CD8-positive, alpha-beta T cell (primary cell): ENCODE measurements at regions of chr12 and their contacts with region 1.

Region 1: DNA sequence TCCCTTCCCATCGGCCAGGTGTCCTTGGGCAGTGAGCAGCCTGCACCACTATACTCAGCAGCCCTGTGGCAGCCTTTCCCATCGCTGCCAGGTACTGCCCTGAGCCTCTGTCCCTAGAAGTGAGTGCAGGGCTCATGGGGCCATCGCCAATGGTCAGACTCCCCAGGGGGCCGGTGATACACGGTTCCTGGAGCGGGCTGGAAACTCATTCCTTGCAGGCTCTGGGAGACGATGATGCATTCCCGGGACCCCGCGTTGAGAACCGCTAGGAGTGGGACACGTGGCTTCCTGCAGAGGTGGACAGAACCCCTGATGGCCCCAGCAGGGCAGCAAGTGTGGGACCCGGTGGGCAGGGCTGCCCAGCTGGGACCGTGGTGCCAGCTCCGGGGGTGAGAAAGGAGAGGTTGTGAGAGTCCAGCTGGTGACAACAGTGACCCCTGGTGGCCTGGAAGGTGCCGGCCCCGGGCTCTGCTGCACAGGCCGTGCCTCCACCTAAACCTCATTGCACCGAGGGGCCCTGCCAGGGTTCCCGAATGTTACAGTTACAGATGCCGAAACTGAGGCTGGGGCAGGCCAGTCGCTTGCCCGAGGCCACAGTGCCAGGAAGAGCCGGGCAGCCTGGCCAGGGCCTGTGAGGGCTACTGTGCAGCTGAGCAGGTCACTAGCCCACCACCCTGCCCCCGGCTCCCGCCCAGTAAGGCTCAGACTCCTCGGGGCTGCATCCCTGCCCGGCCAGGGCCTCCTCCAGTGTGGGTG is 33.8 kb downstream of the FBRSL1 start:
- DNase-seq: peak; percentile 54 to 86 (median 74)
- ATAC-seq: peak; percentile 71
- H3K4me3 ChIP-seq: no peak overlapping the region
- H3K4me3 Mint-ChIP-seq: no peak overlapping the region
- H3K27ac ChIP-seq: no peak overlapping the region
- H3K27ac Mint-ChIP-seq: no peak overlapping the region
- H3K4me1 ChIP-seq: peaks cover 8% of the 10 kb centered on the region
- H3K4me1 Mint-ChIP-seq: peaks cover 12% of the 10 kb centered on the region
- H3K27me3 ChIP-seq: no peaks in the 10 kb centered on the region
- H3K27me3 Mint-ChIP-seq: no peaks in the 10 kb centered on the region
- CTCF ChIP-seq: peak; percentile 78

Region 2: GRCh38 chr12:132460571-132460970 is 63.2 kb before region 1 on chr12:
- CTCF ChIA-PET with region 1: interaction called, 14 read pairs
- POLR2A ChIA-PET with region 1: no interaction called
- intact Hi-C with region 1: no loop called
- DNase-seq: no peak
- ATAC-seq: no peak
- H3K4me3 ChIP-seq: no peak overlapping the region
- H3K4me3 Mint-ChIP-seq: no peak overlapping the region
- H3K27ac ChIP-seq: no peak overlapping the region
- H3K27ac Mint-ChIP-seq: no peak overlapping the region
- H3K4me1 ChIP-seq: peaks cover 6% of the 10 kb centered on the region
- H3K4me1 Mint-ChIP-seq: peaks cover 11% of the 10 kb centered on the region
- H3K27me3 ChIP-seq: no peaks in the 10 kb centered on the region
- H3K27me3 Mint-ChIP-seq: no peaks in the 10 kb centered on the region
- CTCF ChIP-seq: no peak

Region 3: DNA sequence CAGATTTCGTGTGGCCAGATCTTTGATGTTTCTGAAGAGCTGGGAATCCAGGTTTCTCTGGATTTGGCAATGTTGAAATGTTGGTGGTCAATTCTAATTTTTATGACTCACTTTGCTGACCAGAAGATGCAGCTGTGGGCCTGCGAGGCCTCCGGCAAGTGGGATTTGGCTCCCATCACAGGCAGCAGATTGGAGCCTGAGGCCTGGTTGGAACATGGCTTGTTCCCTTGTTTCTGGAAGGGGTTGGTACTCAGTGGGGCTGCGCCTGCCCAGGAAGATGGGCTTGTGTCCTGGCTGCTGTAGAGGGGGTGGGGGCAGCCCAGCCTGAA is 10.7 kb before region 1 on chr12:
- CTCF ChIA-PET with region 1: interaction called, 12 read pairs
- POLR2A ChIA-PET with region 1: no interaction called
- intact Hi-C with region 1: no loop called
- DNase-seq: no peak
- ATAC-seq: no peak
- H3K4me3 ChIP-seq: no peak overlapping the region
- H3K4me3 Mint-ChIP-seq: no peak overlapping the region
- H3K27ac ChIP-seq: no peak overlapping the region
- H3K27ac Mint-ChIP-seq: no peak overlapping the region
- H3K4me1 ChIP-seq: peaks cover under 1% of the 10 kb centered on the region
- H3K4me1 Mint-ChIP-seq: peaks cover 4% of the 10 kb centered on the region
- H3K27me3 ChIP-seq: peaks cover 0 to 2% of the 10 kb centered on the region in 2 experiments
- H3K27me3 Mint-ChIP-seq: no peaks in the 10 kb centered on the region
- CTCF ChIP-seq: no peak

Region 4: GRCh38 chr12:132614861-132615578 is 91.3 kb after region 1 on chr12:
- CTCF ChIA-PET with region 1: interaction called, 3 read pairs
- POLR2A ChIA-PET with region 1: interaction called, 3 read pairs
- intact Hi-C with region 1: loop called in 1 of 2 experiments (anchors 10 kb)
- DNase-seq: peak; percentile 62 to 90 (median 79)
- ATAC-seq: peak; percentile 91
- H3K4me3 ChIP-seq: no peak overlapping the region
- H3K4me3 Mint-ChIP-seq: no peak overlapping the region
- H3K27ac ChIP-seq: no peak overlapping the region
- H3K27ac Mint-ChIP-seq: no peak overlapping the region
- H3K4me1 ChIP-seq: peaks cover 11% of the 10 kb centered on the region
- H3K4me1 Mint-ChIP-seq: peaks cover 14% of the 10 kb centered on the region
- H3K27me3 ChIP-seq: peaks cover 20 to 22% of the 10 kb centered on the region in 2 experiments
- H3K27me3 Mint-ChIP-seq: peaks cover 45% of the 10 kb centered on the region
- CTCF ChIP-seq: peak; percentile 81